Activated B cell treated with CpG ODN at 0.5 μM for 24 hours (primary cell): ENCODE measurements at regions of chr20 and their contacts with region 1.

Region 1: DNA sequence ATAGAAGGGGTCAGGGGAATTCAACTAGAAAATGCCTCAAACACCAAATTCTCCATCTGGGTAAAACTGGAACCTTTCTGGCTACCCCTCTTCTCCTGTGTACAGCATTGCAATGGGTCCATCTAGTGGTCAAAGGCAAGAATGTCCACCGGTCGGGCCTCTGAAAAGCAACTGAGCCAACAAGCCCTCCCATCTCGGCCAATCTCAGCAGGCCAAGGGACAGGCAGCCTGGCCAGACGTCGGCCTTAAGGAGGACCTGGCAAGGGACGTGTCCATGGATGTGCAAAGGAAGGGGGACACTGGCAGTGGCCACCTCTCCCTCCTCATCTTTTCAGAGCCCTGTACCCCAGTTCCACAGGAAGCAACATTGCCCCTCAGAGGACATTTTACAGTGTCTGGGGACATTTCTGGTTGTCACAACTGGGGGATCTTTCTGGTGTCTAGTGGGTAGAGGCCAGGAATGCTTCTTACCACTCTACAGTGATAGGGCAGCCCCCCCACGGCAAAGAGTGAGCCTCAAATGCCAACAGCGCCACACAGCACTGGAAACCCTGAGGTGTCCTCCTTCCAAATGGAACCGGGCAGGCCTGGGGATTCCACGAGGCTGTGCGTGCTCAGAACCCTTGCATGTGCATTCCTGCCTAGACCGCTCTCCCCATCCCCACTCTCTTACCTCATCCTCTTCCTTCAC is 99.8 kb upstream of the FOXA2 start:
- DNase-seq: no peak
- ATAC-seq: peak; percentile 37
- H3K4me3 Mint-ChIP-seq: no peak overlapping the region
- H3K27ac Mint-ChIP-seq: no peak overlapping the region
- H3K4me1 Mint-ChIP-seq: peaks cover 6% of the 10 kb centered on the region
- H3K27me3 Mint-ChIP-seq: no peaks in the 10 kb centered on the region
- CTCF ChIP-seq: no peak

Region 2: DNA sequence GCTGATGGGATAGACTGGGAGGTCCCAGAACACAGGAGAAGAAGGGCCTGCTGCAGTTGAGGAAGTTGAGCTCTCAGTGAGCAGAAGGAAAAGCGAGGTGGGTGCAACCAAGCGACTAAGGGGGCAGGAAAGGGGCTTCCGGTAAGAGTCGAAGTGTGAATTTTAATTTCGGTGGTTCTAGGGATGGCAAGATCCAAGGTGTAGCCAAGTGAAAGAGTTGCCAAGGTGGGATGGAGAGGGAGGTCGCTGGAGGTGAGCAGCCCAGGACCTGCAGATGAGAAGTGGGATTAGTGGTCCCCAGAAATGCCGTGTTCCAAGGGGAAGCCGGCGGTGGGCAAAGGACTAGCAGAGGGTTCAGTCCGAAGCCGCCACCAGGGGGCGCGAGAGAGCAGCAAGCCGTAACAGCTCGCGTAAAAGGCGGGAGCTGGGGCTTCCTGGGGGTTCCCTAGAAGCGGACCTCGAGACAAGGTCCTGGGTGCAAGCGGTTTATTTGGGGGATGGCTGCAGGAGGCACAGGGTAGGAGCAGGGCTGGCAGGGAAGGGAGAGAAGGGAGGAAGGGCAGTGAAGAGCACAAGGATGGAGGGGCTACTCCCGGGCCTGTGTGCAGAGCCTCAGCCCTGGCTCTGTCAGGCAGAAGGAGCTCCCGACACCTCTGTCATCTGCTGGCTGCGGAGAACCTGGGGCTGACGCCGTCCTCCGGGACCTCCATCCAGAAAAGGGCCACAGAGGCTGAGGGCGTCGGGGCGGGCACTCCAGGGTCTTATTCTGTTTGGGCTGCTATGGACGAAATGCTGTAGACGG is 875.2 kb before region 1 on chr20:
- CTCF ChIA-PET with region 1: no interaction called
- POLR2A ChIA-PET with region 1: no interaction called
- intact Hi-C with region 1: loop called (anchors 5 kb)
- DNase-seq: peak; percentile 20
- ATAC-seq: peak; percentile 34
- H3K4me3 Mint-ChIP-seq: no peak overlapping the region
- H3K27ac Mint-ChIP-seq: no peak overlapping the region
- H3K4me1 Mint-ChIP-seq: no peaks in the 10 kb centered on the region
- H3K27me3 Mint-ChIP-seq: peaks cover 2% of the 10 kb centered on the region
- CTCF ChIP-seq: no peak

Region 3: DNA sequence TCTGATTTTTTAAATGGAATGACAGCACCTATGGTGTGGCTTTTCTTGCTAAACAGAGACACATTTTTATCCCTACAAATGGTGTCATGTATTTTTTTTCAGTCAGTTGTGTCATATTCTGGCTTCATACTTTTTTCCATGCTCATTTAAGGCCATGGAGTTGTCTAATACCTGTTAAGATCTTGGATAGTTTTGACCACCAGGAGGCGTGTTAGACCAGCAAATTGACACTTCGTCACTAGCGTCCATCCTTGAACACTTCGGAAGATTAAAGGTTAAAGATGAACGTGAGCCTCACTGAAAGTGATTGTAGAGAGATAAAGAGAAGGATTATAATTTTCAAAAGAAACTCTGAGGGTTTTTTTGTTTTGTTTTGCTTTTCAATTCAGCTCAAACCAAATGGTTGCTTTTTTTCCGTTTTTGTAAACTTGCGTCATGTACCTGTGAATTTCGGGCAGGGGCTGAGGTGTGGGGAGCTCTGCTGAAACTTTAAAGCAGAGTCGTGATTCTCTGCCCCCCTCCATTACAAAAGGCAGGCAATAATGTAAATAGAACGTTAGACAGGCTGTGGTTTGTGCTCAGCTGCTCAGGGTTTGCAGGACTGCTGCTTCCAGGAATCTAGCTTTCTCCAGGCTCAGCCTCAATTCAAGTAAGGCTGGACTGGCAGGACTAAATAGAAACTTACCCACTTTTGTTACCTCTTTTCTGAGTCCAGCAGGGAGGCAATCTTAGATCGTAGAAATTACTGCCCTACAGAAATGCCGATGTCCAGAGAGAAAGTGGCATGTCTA is 344.9 kb before region 1 on chr20:
- CTCF ChIA-PET with region 1: interaction called, 35 read pairs
- POLR2A ChIA-PET with region 1: no interaction called
- intact Hi-C with region 1: loop called (anchors 1 kb)
- DNase-seq: no peak
- ATAC-seq: no peak
- H3K4me3 Mint-ChIP-seq: no peak overlapping the region
- H3K27ac Mint-ChIP-seq: no peak overlapping the region
- H3K4me1 Mint-ChIP-seq: no peaks in the 10 kb centered on the region
- H3K27me3 Mint-ChIP-seq: peaks cover 10% of the 10 kb centered on the region
- CTCF ChIP-seq: no peak

Region 4: DNA sequence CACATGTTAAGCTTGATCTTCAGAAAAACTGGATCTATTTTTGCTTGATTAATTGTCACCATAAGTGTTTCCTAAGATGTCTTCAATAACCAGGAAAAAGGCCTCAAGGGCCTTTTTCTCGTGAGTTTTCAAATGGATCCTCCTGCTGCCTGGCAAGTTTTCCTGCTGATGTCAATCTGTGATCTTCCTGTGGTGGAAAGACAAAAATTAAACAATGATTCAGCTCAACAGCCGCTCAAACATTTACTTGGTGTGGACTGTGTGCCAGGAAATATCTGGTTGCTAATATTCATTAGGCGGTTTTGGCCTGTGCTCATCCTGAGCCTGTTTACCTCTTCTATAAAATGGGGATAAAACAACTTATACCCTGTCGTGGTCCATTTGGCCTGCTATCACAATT is 315.5 kb after region 1 on chr20:
- CTCF ChIA-PET with region 1: no interaction called
- POLR2A ChIA-PET with region 1: no interaction called
- intact Hi-C with region 1: no loop called
- DNase-seq: no peak
- ATAC-seq: no peak
- H3K4me3 Mint-ChIP-seq: no peak overlapping the region
- H3K27ac Mint-ChIP-seq: no peak overlapping the region
- H3K4me1 Mint-ChIP-seq: no peaks in the 10 kb centered on the region
- H3K27me3 Mint-ChIP-seq: peaks cover 3% of the 10 kb centered on the region
- CTCF ChIP-seq: no peak

Region 5: DNA sequence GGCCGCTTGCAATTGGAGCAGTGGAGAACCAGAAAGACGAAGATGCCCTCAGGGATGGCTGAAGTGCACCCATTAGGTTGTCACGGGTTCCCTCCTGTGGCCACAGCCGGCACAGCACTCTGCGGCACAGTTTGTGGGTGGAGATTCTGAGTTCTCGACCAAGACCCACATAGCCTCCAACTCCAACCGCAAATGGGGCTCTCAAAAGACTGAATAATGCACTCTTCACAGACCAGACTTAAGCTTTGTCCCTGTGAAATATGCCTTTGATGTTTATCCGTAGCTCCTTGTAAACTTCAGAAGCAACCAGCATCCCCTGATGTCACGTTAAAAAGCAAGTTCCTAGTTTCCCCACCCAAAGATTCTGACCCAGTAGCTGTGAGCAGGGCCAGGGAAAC is 922.4 kb after region 1 on chr20:
- CTCF ChIA-PET with region 1: no interaction called
- POLR2A ChIA-PET with region 1: no interaction called
- intact Hi-C with region 1: no loop called
- DNase-seq: peak; percentile 26
- ATAC-seq: peak; percentile 77
- H3K4me3 Mint-ChIP-seq: no peak overlapping the region
- H3K27ac Mint-ChIP-seq: no peak overlapping the region
- H3K4me1 Mint-ChIP-seq: no peaks in the 10 kb centered on the region
- H3K27me3 Mint-ChIP-seq: peaks cover 4% of the 10 kb centered on the region
- CTCF ChIP-seq: no peak